Naive thymus-derived CD4-positive, alpha-beta T cell (primary cell): ENCODE measurements at regions of chr15 and their contacts with region 1.

Region 1: GRCh38 chr15:77419836-77420609 is at the start of gene PEAK1:
- DNase-seq: peak; percentile 94 to 100 (median 99)
- ATAC-seq: peak; percentile 99
- H3K4me3 ChIP-seq: peak within 1 kb of the TSS; percentile 74
- H3K4me3 Mint-ChIP-seq: peak within 1 kb of the TSS; percentile 93 to 99 (median 98)
- H3K27ac ChIP-seq: peak within 1 kb of the TSS; percentile 86
- H3K27ac Mint-ChIP-seq: peak within 1 kb of the TSS; percentile 91 to 98 (median 97)
- H3K4me1 ChIP-seq: peaks cover 5 to 12% of the 10 kb centered on the region in 2 donors
- H3K4me1 Mint-ChIP-seq: peaks cover 21 to 50% (median 47%) of the 10 kb centered on the region in 7 donors
- H3K27me3 ChIP-seq: no peaks in the 10 kb centered on the region
- H3K27me3 Mint-ChIP-seq: peaks cover 0 to 4% (median 0%) of the 10 kb centered on the region in 5 donors
- total RNA-seq, gene PEAK1: 11.1 to 31.0 (median 15.0) TPM

Region 2: DNA sequence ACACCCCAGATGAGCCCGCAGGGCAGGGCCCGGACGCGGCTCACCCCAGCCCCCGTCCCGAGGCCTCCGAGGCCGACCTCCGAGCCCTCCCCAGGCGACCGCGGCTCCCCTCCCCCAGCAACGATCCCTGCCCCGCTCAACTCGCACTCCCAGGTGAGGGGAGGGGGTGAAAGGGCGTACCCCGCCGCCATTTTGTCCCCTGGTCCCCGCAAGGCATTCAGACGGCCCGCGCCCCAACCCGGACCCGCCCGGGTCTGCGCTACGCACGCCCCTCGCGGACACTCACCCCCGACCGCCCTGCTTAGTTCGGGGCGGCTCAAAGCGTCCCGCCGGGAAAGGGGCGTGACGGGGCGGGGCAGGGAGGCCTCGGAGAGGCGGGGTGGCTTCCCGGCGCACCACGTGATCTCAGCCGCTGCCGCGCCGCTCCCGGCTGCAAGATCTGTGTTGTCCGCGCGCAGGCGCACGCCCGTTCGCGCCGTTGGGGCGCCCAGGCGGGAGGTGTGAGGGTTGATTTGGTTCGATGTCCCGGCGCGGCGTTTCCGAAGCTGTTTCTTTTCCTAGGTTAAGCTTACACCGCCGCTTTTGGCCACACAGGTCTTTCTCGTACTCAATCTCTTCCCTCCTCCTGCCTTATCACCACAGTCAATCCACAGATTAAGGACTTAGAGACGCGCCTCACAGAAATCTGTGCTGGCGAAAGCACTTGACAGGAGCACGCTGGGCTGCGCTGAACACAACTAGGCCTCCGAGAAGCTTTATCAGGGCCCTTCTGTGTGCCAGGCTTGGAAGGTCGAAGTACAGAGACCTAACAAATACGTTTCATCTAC is 514.8 kb before region 1 on chr15 and contains the start of gene SCAPER:
- CTCF ChIA-PET with region 1: no interaction called
- POLR2A ChIA-PET with region 1: interaction called, 3 read pairs
- intact Hi-C with region 1: loop called in 1 of 2 experiments (anchors 1 kb)
- DNase-seq: peak; percentile 84 to 94 (median 90)
- ATAC-seq: peak; percentile 95
- H3K4me3 ChIP-seq: peak within 1 kb of the TSS; percentile 64
- H3K4me3 Mint-ChIP-seq: peak within 1 kb of the TSS; percentile 86 to 96 (median 94)
- H3K27ac ChIP-seq: peak within 1 kb of the TSS; percentile 84
- H3K27ac Mint-ChIP-seq: peak within 1 kb of the TSS; percentile 93 to 99 (median 97)
- H3K4me1 ChIP-seq: peaks cover 8 to 26% of the 10 kb centered on the region in 2 donors
- H3K4me1 Mint-ChIP-seq: peaks cover 18 to 43% (median 36%) of the 10 kb centered on the region in 7 donors
- H3K27me3 ChIP-seq: no peaks in the 10 kb centered on the region
- H3K27me3 Mint-ChIP-seq: no peaks in the 10 kb centered on the region
- total RNA-seq, gene SCAPER: 25.1 to 56.9 (median 54.7) TPM

Region 3: GRCh38 chr15:77013776-77014131 is 406.3 kb before region 1 on chr15:
- CTCF ChIA-PET with region 1: no interaction called
- POLR2A ChIA-PET with region 1: no interaction called
- intact Hi-C with region 1: loop called in 1 of 2 experiments (anchors 5 kb)
- DNase-seq: peak in 5 of 9 donors; percentile 45 to 82 (median 49)
- ATAC-seq: peak; percentile 73
- H3K4me3 ChIP-seq: peak overlapping the region; percentile 43
- H3K4me3 Mint-ChIP-seq: peak overlapping the region; percentile 64 to 91 (median 77)
- H3K27ac ChIP-seq: peak overlapping the region; percentile 58
- H3K27ac Mint-ChIP-seq: peak overlapping the region; percentile 76 to 97 (median 95)
- H3K4me1 ChIP-seq: peaks cover 62 to 99% of the 10 kb centered on the region in 2 donors
- H3K4me1 Mint-ChIP-seq: peaks cover 58 to 93% (median 75%) of the 10 kb centered on the region in 7 donors
- H3K27me3 ChIP-seq: no peaks in the 10 kb centered on the region
- H3K27me3 Mint-ChIP-seq: no peaks in the 10 kb centered on the region

Region 4: GRCh38 chr15:77409259-77410156 is 10.5 kb before region 1 on chr15:
- CTCF ChIA-PET with region 1: no interaction called
- POLR2A ChIA-PET with region 1: interaction called, 12 read pairs
- intact Hi-C with region 1: loop called (anchors 1 kb)
- DNase-seq: peak in 7 of 9 donors; percentile 29 to 68 (median 51)
- ATAC-seq: peak; percentile 84
- H3K4me3 ChIP-seq: no peak overlapping the region
- H3K4me3 Mint-ChIP-seq: peak overlapping the region; percentile 38 to 91 (median 78)
- H3K27ac ChIP-seq: no peak overlapping the region
- H3K27ac Mint-ChIP-seq: peak overlapping the region; percentile 2 to 88 (median 78)
- H3K4me1 ChIP-seq: peaks cover 9 to 12% of the 10 kb centered on the region in 2 donors
- H3K4me1 Mint-ChIP-seq: peaks cover 11 to 49% (median 31%) of the 10 kb centered on the region in 7 donors
- H3K27me3 ChIP-seq: no peaks in the 10 kb centered on the region
- H3K27me3 Mint-ChIP-seq: no peaks in the 10 kb centered on the region

Region 5: GRCh38 chr15:77475898-77476297 is 55.9 kb after region 1 on chr15:
- CTCF ChIA-PET with region 1: no interaction called
- POLR2A ChIA-PET with region 1: no interaction called
- intact Hi-C with region 1: no loop called
- DNase-seq: no peak
- ATAC-seq: no peak
- H3K4me3 ChIP-seq: no peak overlapping the region
- H3K4me3 Mint-ChIP-seq: no peak overlapping the region
- H3K27ac ChIP-seq: no peak overlapping the region
- H3K27ac Mint-ChIP-seq: no peak overlapping the region
- H3K4me1 ChIP-seq: no peaks in the 10 kb centered on the region
- H3K4me1 Mint-ChIP-seq: peaks cover 0 to 5% (median 0%) of the 10 kb centered on the region in 7 donors
- H3K27me3 ChIP-seq: no peaks in the 10 kb centered on the region
- H3K27me3 Mint-ChIP-seq: no peaks in the 10 kb centered on the region

Region 6: DNA sequence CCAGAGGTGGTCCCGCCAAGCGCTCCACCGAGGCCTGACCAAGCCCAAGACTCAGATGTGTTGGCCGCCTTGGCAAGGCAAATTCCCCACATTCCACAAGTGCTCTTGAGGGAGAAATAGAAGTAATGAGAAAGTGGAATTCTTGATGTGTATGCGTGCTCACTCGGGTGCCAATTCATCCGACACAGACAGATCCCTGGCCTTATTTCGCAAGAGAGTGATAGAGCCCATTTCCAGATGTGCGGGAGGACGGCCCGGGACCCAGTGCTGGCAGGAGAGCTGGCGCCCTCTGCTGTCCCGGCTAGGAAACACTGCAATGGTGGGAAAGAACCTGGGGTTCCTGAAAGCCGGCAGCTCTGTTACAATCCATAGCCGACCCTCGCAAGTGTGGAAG is 76.7 kb after region 1 on chr15:
- CTCF ChIA-PET with region 1: interaction called, 3 read pairs
- POLR2A ChIA-PET with region 1: no interaction called
- intact Hi-C with region 1: loop called in 1 of 2 experiments (anchors 5 kb)
- DNase-seq: peak; percentile 37 to 76 (median 60)
- ATAC-seq: peak; percentile 84
- H3K4me3 ChIP-seq: no peak overlapping the region
- H3K4me3 Mint-ChIP-seq: no peak overlapping the region
- H3K27ac ChIP-seq: no peak overlapping the region
- H3K27ac Mint-ChIP-seq: no peak overlapping the region
- H3K4me1 ChIP-seq: peaks cover 3 to 5% of the 10 kb centered on the region in 2 donors
- H3K4me1 Mint-ChIP-seq: peaks cover 13 to 29% (median 24%) of the 10 kb centered on the region in 7 donors
- H3K27me3 ChIP-seq: no peaks in the 10 kb centered on the region
- H3K27me3 Mint-ChIP-seq: no peaks in the 10 kb centered on the region